ENCODE measurements at regions of chr1 and their contacts with region 1.

Region 1: GRCh38 chr1:26472901-26473845 is 933 bp downstream of the HMGN2 start:
- DNase-seq: peak; percentile 92 to 97 (median 95)
- ATAC-seq: peak; percentile 90
- H3K4me3 ChIP-seq: peak overlapping the region; percentile 72
- H3K4me3 Mint-ChIP-seq: peak overlapping the region; percentile 85 to 100 (median 88)
- H3K27ac ChIP-seq: peak overlapping the region; percentile 100
- H3K27ac Mint-ChIP-seq: peak overlapping the region; percentile 60 to 97 (median 87)
- H3K4me1 ChIP-seq: peaks cover 30 to 35% of the 10 kb centered on the region in 2 donors
- H3K4me1 Mint-ChIP-seq: peaks cover 28 to 62% (median 59%) of the 10 kb centered on the region in 7 donors
- H3K27me3 ChIP-seq: no peaks in the 10 kb centered on the region
- H3K27me3 Mint-ChIP-seq: peaks cover 0 to 2% (median 0%) of the 10 kb centered on the region in 5 donors

Region 2: DNA sequence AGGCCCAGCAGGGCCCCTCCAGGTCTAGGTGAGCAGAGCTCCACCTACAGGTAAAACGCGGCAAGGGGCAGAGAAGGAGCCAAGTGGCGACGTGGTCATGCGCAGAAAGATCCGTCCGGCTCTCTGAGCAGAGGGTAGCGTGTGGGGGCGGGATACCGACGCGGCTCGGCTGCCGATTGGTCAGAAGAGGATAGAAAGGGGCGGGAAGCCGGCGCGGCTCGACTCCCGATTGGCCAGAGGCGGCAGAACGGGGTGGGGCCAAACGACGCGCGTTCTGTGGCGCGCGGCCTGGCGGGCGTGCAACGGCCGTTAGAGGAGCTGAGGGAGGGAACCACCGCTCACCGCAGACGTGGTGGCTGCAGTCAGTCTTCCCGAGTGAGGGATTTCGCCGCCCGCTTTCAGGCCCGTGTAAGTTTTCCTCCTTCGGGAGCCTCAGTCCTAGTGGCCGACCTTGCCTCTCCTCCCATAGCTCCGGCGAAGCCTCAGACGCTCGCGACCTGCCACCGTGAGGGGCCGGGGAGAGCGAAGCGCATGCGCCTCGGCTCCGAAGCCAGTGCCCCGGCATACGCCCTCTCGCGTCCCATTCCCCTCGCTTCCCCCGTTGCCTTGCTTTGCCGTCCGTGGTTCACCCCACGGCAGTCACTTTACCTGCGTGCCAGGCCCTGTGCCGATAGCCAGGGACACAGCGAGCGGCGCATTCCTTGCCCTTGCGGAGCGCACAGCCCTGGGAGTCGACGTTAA is 239.1 kb before region 1 on chr1 and contains the start of gene CEP85:
- CTCF ChIA-PET with region 1: interaction called, 3 read pairs
- POLR2A ChIA-PET with region 1: interaction called, 7 read pairs
- intact Hi-C with region 1: loop called (anchors 1 kb)
- DNase-seq: peak; percentile 93 to 99 (median 98)
- ATAC-seq: peak; percentile 96
- H3K4me3 ChIP-seq: peak within 1 kb of the TSS; percentile 91
- H3K4me3 Mint-ChIP-seq: peak within 1 kb of the TSS; percentile 89 to 99 (median 99)
- H3K27ac ChIP-seq: peak within 1 kb of the TSS; percentile 93
- H3K27ac Mint-ChIP-seq: peak within 1 kb of the TSS; percentile 87 to 99 (median 96)
- H3K4me1 ChIP-seq: peaks cover 4 to 13% of the 10 kb centered on the region in 2 donors
- H3K4me1 Mint-ChIP-seq: peaks cover 26 to 39% (median 38%) of the 10 kb centered on the region in 7 donors
- H3K27me3 ChIP-seq: no peaks in the 10 kb centered on the region
- H3K27me3 Mint-ChIP-seq: peaks cover 0 to 8% (median 0%) of the 10 kb centered on the region in 5 donors
- total RNA-seq, gene CEP85: 12.1 to 34.8 (median 20.7) TPM

Region 3: GRCh38 chr1:26363549-26364448 is 109.4 kb before region 1 on chr1:
- CTCF ChIA-PET with region 1: no interaction called
- POLR2A ChIA-PET with region 1: no interaction called
- intact Hi-C with region 1: loop called in 1 of 2 experiments (anchors 5 kb)
- DNase-seq: peak; percentile 71 to 87 (median 82)
- ATAC-seq: peak; percentile 84
- H3K4me3 ChIP-seq: no peak overlapping the region
- H3K4me3 Mint-ChIP-seq: peak overlapping the region in 6 of 10 donors; percentile 39 to 72 (median 40)
- H3K27ac ChIP-seq: no peak overlapping the region
- H3K27ac Mint-ChIP-seq: peak overlapping the region in 4 of 9 donors; percentile 20 to 52 (median 40)
- H3K4me1 ChIP-seq: peaks cover 30 to 44% of the 10 kb centered on the region in 2 donors
- H3K4me1 Mint-ChIP-seq: peaks cover 28 to 53% (median 47%) of the 10 kb centered on the region in 7 donors
- H3K27me3 ChIP-seq: no peaks in the 10 kb centered on the region
- H3K27me3 Mint-ChIP-seq: peaks cover 7 to 37% (median 16%) of the 10 kb centered on the region in 5 donors

Region 4: DNA sequence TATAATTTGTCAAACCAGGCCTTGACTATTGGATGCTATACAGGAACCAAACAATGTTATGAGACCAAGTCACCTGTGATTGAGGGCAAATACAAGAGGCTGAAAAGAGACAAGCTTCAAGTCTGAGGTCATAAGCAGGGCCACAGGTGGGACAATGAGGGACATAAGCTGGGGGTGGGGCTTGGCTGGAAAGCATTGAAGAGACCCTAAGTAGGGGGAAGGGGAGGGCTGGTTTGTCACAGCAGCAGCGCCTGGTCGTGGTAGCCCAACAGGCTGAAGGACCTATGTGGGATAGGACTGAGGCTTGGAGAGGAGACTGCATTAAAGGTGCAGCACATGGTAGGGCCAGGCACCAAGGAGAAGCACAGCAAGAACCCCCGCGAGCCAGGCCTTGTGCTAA is 17.0 kb after region 1 on chr1:
- CTCF ChIA-PET with region 1: interaction called, 4 read pairs
- POLR2A ChIA-PET with region 1: interaction called, 12 read pairs
- intact Hi-C with region 1: no loop called
- DNase-seq: no peak
- ATAC-seq: no peak
- H3K4me3 ChIP-seq: no peak overlapping the region
- H3K4me3 Mint-ChIP-seq: no peak overlapping the region
- H3K27ac ChIP-seq: no peak overlapping the region
- H3K27ac Mint-ChIP-seq: no peak overlapping the region
- H3K4me1 ChIP-seq: no peaks in the 10 kb centered on the region
- H3K4me1 Mint-ChIP-seq: peaks cover 0 to 2% (median under 1%) of the 10 kb centered on the region in 7 donors
- H3K27me3 ChIP-seq: no peaks in the 10 kb centered on the region
- H3K27me3 Mint-ChIP-seq: no peaks in the 10 kb centered on the region

Region 5: DNA sequence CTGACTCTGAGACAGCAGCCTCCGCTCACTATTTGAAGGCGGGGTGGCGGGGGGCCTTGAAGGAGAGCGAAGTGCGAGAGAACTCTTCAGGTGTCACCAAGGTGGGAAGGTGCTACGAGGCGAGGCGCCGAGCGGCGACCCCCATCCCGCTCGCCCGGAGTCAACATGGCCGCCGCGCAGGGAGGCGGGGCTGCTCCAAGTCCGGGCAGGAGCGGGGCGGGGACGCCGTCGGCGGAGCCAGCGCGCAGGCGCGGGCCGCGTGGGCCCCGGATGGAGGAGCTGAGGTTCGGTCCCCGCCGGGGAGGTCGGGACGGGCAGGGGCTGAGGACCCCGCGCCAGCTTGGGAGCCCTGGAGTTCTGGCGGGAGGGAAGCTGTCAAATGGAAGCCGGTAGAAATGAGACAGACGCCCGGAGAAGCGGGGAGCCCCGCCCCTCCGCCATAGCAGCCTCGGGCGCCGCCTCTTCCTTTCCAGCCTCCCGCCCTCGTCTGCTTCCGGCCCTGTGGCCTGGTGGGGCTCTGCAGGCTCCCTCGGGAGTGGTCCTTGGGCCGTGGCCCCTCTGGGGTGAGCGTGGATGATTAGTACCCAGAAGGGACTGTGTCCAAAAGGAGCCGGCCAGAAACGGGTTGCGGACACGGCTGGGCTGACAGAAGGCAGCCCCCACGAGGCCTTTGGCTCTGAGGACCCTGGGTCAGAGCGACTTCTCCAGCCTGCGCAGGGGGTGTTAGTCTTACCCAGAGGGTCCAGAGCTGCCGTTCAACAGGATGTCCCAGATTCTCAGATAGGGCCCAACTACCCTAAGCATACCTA is 314.7 kb after region 1 on chr1 and contains the start of gene PIGV:
- CTCF ChIA-PET with region 1: no interaction called
- POLR2A ChIA-PET with region 1: no interaction called
- intact Hi-C with region 1: loop called in 1 of 2 experiments (anchors 2 kb)
- DNase-seq: peak; percentile 81 to 95 (median 90)
- ATAC-seq: peak; percentile 84
- H3K4me3 ChIP-seq: peak within 1 kb of the TSS; percentile 91
- H3K4me3 Mint-ChIP-seq: peak within 1 kb of the TSS; percentile 81 to 99 (median 90)
- H3K27ac ChIP-seq: peak within 1 kb of the TSS; percentile 95
- H3K27ac Mint-ChIP-seq: peak within 1 kb of the TSS; percentile 87 to 100 (median 99)
- H3K4me1 ChIP-seq: peaks cover 41 to 42% of the 10 kb centered on the region in 2 donors
- H3K4me1 Mint-ChIP-seq: peaks cover 38 to 74% (median 69%) of the 10 kb centered on the region in 7 donors
- H3K27me3 ChIP-seq: no peaks in the 10 kb centered on the region
- H3K27me3 Mint-ChIP-seq: no peaks in the 10 kb centered on the region
- total RNA-seq, gene PIGV: 8.4 to 17.9 (median 16.7) TPM

Measured in naive thymus-derived CD4-positive, alpha-beta T cell (primary cell).